ENCODE measurements at regions of chr15 and their contacts with region 1.

Region 1: DNA sequence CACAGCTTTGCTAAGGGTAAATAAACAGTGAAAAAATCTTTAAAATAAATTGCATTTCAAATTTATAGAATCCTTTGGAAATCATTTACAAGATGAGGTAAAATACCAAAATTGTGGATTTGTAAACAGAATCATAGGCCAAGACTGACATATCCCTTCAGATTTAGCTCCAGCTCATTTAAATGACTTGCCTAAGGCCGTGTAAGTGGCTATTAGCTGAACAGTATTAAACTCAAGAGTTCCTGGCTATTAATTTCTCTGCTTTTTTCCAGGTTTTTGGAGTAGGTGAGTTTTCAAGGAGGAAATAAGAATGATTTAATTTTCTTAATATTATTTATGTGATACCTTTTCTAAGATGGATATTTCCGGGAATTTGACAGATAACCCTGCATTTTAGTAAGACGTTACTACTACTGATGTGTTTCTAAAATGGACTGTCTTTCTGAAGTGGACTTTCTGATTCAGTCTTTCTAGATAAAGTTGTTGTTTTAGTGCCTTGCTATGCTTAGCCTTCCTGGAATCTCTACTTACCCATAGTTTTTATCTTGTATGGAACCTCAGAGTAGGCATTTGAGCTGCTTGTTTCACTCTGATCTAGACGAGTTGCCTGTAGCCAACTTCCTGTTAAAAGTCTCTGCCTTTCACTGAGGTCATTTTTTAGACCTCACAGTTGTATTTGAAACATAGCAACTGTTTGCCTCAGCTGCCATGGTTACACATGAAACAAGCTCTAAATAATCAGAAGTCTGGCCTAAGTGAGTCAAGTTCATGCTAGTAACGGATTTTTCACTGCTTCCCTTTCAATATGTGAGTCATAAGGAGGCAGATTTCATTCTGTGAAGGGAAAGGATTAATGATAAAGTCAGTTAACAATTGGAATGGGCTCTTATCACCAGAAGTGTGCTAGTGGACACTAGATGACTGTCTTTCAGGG is 127.0 kb downstream of the KLHL25 start:
- DNase-seq: peak; percentile 42 to 94
- ATAC-seq: peak; percentile 86 to 92 (median 92)
- H3K4me3 ChIP-seq: no peak overlapping the region
- H3K4me3 Mint-ChIP-seq: peak overlapping the region; percentile 75
- H3K27ac ChIP-seq: peak overlapping the region; percentile 100
- H3K27ac Mint-ChIP-seq: peak overlapping the region; percentile 99
- H3K4me1 ChIP-seq: peaks cover 9% of the 10 kb centered on the region
- H3K4me1 Mint-ChIP-seq: peaks cover 21 to 22% of the 10 kb centered on the region in 2 donors
- H3K27me3 ChIP-seq: no peaks in the 10 kb centered on the region
- H3K27me3 Mint-ChIP-seq: no peaks in the 10 kb centered on the region
- CTCF ChIP-seq: no peak

Region 2: DNA sequence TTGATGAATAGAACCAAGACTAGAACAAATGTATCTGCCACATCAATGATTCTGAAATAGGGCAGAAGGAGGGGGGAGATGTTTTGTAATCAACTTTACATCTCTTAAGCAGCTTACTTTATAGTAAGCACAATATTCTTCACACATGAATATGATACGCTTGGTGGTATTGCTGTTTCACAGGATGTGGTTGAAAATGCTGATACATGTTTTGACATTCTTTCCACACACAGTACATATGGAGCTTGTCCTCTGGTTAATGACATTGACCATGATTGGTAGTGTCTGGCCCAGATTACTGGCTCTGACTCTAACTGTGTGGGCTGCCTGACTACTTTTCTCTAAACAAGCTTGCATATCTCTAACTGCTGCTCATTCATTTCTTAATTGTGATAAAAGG is 41.9 kb before region 1 on chr15:
- intact Hi-C with region 1: loop called (anchors 1 kb)
- DNase-seq: peak in 1 of 2 donors; percentile 73
- ATAC-seq: peak; percentile 81 to 95 (median 89)
- H3K4me3 ChIP-seq: no peak overlapping the region
- H3K4me3 Mint-ChIP-seq: peak overlapping the region; percentile 71
- H3K27ac ChIP-seq: peak overlapping the region; percentile 83
- H3K27ac Mint-ChIP-seq: peak overlapping the region; percentile 88 to 94
- H3K4me1 ChIP-seq: peaks cover 16% of the 10 kb centered on the region
- H3K4me1 Mint-ChIP-seq: peaks cover 74 to 78% of the 10 kb centered on the region in 2 donors
- H3K27me3 ChIP-seq: no peaks in the 10 kb centered on the region
- H3K27me3 Mint-ChIP-seq: no peaks in the 10 kb centered on the region
- CTCF ChIP-seq: no peak

Region 3: GRCh38 chr15:85636351-85636750 is 31.4 kb before region 1 on chr15:
- intact Hi-C with region 1: no loop called
- DNase-seq: no peak
- ATAC-seq: no peak
- H3K4me3 ChIP-seq: no peak overlapping the region
- H3K4me3 Mint-ChIP-seq: no peak overlapping the region
- H3K27ac ChIP-seq: no peak overlapping the region
- H3K27ac Mint-ChIP-seq: peak overlapping the region in 1 of 2 donors; percentile 7
- H3K4me1 ChIP-seq: no peaks in the 10 kb centered on the region
- H3K4me1 Mint-ChIP-seq: peaks cover 8 to 25% of the 10 kb centered on the region in 2 donors
- H3K27me3 ChIP-seq: no peaks in the 10 kb centered on the region
- H3K27me3 Mint-ChIP-seq: no peaks in the 10 kb centered on the region
- CTCF ChIP-seq: no peak

Region 4: DNA sequence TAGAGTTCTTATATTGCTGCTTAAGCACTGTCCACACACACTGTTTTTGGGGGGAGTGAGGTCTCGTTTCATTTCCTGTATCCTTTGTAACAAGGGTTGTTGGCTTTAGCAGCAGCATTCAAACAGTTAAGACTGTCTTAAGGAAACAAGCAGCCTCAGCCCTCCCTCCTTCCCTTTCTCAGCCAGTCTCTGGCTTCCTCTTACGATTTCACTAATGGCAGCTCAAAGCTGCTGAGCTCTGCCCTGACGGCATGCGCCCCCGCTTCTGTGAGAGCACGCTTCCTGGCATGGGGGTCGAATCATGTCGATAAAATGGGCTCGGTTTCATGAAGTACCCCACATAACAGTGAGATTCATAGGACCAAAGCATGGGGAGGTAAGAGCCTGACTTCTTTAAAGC is 22.0 kb after region 1 on chr15:
- intact Hi-C with region 1: loop called (anchors 1 kb)
- DNase-seq: peak; percentile 72 to 86
- ATAC-seq: peak; percentile 51 to 75 (median 68)
- H3K4me3 ChIP-seq: peak overlapping the region; percentile 70
- H3K4me3 Mint-ChIP-seq: peak overlapping the region; percentile 99
- H3K27ac ChIP-seq: peak overlapping the region; percentile 94
- H3K27ac Mint-ChIP-seq: peak overlapping the region; percentile 99 to 100
- H3K4me1 ChIP-seq: peaks cover 32% of the 10 kb centered on the region
- H3K4me1 Mint-ChIP-seq: peaks cover 62 to 65% of the 10 kb centered on the region in 2 donors
- H3K27me3 ChIP-seq: no peaks in the 10 kb centered on the region
- H3K27me3 Mint-ChIP-seq: no peaks in the 10 kb centered on the region
- CTCF ChIP-seq: no peak

Region 5: DNA sequence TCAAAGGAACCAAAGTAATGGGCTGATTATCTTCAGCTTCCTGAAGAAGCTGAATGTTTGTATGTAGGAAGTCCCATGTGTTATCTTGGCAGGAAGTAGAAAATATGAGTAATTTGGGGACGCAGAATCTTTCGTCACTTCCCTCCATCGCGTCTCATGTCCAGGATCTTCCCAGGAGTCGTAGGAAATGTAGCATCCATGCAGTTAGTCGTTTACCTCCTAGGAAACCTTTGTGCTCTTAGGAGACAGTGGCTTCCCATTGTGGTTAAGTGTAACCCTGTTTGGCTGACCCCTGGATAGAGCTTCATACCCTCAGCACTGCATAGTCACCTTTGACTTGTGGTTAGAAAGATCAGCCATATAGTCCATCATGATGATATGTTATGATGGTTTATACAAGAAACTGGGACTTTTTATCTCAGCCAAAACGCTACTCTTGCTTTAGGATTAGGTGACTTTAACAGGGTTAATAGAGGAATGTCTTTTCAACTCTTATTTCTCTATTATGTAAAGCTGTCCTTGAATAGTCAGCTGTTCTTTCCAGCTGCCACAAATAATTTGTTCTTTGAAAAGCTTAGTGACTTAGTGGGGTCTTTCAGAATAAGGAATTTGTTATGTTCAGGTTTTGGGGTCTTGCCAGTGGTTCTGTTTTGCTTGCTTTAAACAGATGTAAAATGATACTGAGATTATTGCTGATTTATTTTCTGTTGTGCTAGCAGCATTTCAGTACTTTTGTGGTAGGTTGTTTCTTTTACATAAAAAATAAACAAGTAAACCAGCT is 34.8 kb after region 1 on chr15:
- intact Hi-C with region 1: loop called (anchors 1 kb)
- DNase-seq: peak; percentile 54 to 81
- ATAC-seq: peak; percentile 56 to 68 (median 59)
- H3K4me3 ChIP-seq: peak overlapping the region; percentile 11
- H3K4me3 Mint-ChIP-seq: peak overlapping the region; percentile 89
- H3K27ac ChIP-seq: peak overlapping the region; percentile 98
- H3K27ac Mint-ChIP-seq: peak overlapping the region; percentile 100
- H3K4me1 ChIP-seq: peaks cover 56% of the 10 kb centered on the region
- H3K4me1 Mint-ChIP-seq: peaks cover 72 to 78% of the 10 kb centered on the region in 2 donors
- H3K27me3 ChIP-seq: no peaks in the 10 kb centered on the region
- H3K27me3 Mint-ChIP-seq: no peaks in the 10 kb centered on the region
- CTCF ChIP-seq: no peak

Region 6: GRCh38 chr15:85707519-85708338 is 40.0 kb after region 1 on chr15:
- intact Hi-C with region 1: loop called (anchors 1 kb)
- DNase-seq: peak in 1 of 2 donors; percentile 76
- ATAC-seq: peak; percentile 29 to 60 (median 47)
- H3K4me3 ChIP-seq: peak overlapping the region; percentile 19
- H3K4me3 Mint-ChIP-seq: peak overlapping the region; percentile 87
- H3K27ac ChIP-seq: peak overlapping the region; percentile 98
- H3K27ac Mint-ChIP-seq: peak overlapping the region; percentile 100
- H3K4me1 ChIP-seq: peaks cover 48% of the 10 kb centered on the region
- H3K4me1 Mint-ChIP-seq: peaks cover 73 to 78% of the 10 kb centered on the region in 2 donors
- H3K27me3 ChIP-seq: no peaks in the 10 kb centered on the region
- H3K27me3 Mint-ChIP-seq: no peaks in the 10 kb centered on the region
- CTCF ChIP-seq: no peak